GM12878 (cell line): ENCODE measurements at regions of chr17 and their contacts with region 1.

Region 1: DNA sequence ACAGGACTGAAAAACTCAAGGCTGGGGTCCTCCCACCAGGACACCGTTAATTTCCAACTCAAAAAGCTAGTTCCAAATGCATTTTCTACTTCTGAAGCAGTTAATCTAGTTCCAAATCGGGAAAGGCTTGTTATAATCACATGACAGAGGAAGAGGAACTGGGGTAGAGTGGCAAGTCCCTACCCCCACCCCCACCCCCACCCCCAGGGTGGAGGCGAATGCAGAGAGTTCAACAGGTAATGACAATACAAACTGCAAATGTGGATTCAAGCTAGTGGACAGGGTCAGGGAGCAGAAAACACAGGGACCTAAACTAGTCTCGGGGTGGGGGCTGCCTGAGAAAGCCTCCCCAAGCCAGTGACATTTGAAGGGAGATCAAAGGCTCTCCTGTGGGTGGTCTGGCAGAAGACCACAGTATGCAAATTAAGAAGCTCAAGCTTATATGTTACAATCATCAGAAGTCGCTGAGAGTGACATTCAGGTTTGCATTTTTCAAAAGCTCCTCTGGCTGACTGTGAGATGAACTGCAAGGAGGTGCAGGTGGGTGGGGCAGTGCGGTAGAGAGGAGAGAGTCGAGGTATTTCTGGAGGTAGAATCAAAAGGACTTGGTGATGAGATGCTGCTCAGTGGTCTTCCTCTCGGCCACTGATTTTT is 56.4 kb upstream of the SLC25A19 start:
- DNase-seq: peak; percentile 91
- ATAC-seq: peak; percentile 79
- H3K4me3 ChIP-seq: peak overlapping the region; percentile 62
- H3K27ac ChIP-seq: peak overlapping the region; percentile 85
- H3K4me1 ChIP-seq: peaks cover 68% of the 10 kb centered on the region
- H3K27me3 ChIP-seq: no peaks in the 10 kb centered on the region
- CTCF ChIP-seq: no peak
- EP300 ChIP-seq: peak; percentile 34 to 65; a peak in 1 of 4 replicates
- POLR2A ChIP-seq: no peak
- RAD21 ChIP-seq: 0 out of 2 replicates have a peak, but pooled peaks have one; percentile 25

Region 2: DNA sequence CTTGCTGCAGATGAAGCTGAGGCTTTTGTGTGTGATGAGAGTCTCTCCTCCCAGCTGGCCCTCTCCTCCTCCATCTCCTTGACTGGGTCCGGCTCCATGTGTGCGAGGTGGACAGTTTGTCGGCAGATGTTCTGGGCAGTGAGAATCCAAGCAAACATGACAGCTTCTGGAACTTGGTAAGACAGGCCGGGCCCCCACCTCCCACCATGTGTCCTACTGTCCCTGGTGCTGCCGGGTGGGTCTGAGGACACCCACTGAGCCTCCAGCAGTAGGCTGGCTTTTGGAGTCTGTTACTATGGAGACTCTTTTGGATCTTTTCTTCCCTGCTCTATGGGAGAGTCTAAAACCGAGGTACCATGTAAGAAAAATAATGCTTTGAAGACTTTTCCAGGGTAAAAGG is 127.5 kb before region 1 on chr17:
- CTCF ChIA-PET with region 1: no interaction called
- POLR2A ChIA-PET with region 1: no interaction called
- RAD21 ChIA-PET with region 1: no interaction called
- SMC1A ChIA-PET with region 1: no interaction called
- in situ Hi-C with region 1: no loop called
- intact Hi-C with region 1: no loop called
- DNase-seq: no peak
- ATAC-seq: no peak
- H3K4me3 ChIP-seq: no peak overlapping the region
- H3K27ac ChIP-seq: no peak overlapping the region
- H3K4me1 ChIP-seq: no peaks in the 10 kb centered on the region
- H3K27me3 ChIP-seq: no peaks in the 10 kb centered on the region
- CTCF ChIP-seq: no peak
- EP300 ChIP-seq: no peak
- POLR2A ChIP-seq: no peak
- RAD21 ChIP-seq: no peak

Region 3: GRCh38 chr17:75313941-75314551 is 31.6 kb before region 1 on chr17:
- CTCF ChIA-PET with region 1: interaction called, 182 read pairs
- POLR2A ChIA-PET with region 1: interaction called, 21 read pairs
- RAD21 ChIA-PET with region 1: interaction called, 17 read pairs
- SMC1A ChIA-PET with region 1: interaction called, 83 read pairs
- in situ Hi-C with region 1: no loop called
- intact Hi-C with region 1: no loop called
- DNase-seq: no peak
- ATAC-seq: peak; percentile 79
- H3K4me3 ChIP-seq: no peak overlapping the region
- H3K27ac ChIP-seq: peak overlapping the region; percentile 87
- H3K4me1 ChIP-seq: peaks cover 67% of the 10 kb centered on the region
- H3K27me3 ChIP-seq: no peaks in the 10 kb centered on the region
- CTCF ChIP-seq: no peak
- EP300 ChIP-seq: 0 out of 4 replicates have a peak, but pooled peaks of 1 of the 2 experiments have one; percentile 36
- POLR2A ChIP-seq: no peak
- RAD21 ChIP-seq: no peak

Region 4: DNA sequence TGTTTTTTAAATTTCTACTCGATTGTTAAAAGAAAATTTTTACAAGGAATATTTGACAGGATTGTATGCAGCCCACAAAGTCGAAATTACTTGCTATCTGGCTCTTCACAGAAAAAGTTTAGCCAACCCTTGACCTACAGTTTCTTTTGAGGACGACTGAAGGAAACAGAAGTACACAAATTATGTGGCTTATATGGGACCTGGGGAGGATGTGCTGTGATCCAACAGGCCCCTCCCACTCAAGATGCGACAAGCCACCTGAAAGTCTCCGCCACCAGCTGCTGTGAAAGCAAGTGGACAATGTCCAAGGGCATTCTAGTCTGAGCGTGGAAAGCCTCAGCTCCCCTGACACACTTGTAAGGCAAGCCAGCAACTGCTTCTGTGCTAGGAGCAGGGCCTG is 14.0 kb before region 1 on chr17:
- CTCF ChIA-PET with region 1: interaction called, 182 read pairs
- POLR2A ChIA-PET with region 1: interaction called, 39 read pairs
- RAD21 ChIA-PET with region 1: interaction called, 18 read pairs
- SMC1A ChIA-PET with region 1: interaction called, 54 read pairs
- in situ Hi-C with region 1: no loop called
- intact Hi-C with region 1: no loop called
- DNase-seq: no peak
- ATAC-seq: no peak
- H3K4me3 ChIP-seq: no peak overlapping the region
- H3K27ac ChIP-seq: no peak overlapping the region
- H3K4me1 ChIP-seq: peaks cover 7% of the 10 kb centered on the region
- H3K27me3 ChIP-seq: no peaks in the 10 kb centered on the region
- CTCF ChIP-seq: no peak
- EP300 ChIP-seq: no peak
- POLR2A ChIP-seq: no peak
- RAD21 ChIP-seq: no peak

Region 5: GRCh38 chr17:75364078-75364477 is 18.4 kb after region 1 on chr17:
- CTCF ChIA-PET with region 1: interaction called, 14 read pairs
- POLR2A ChIA-PET with region 1: interaction called, 64 read pairs
- RAD21 ChIA-PET with region 1: interaction called, 14 read pairs
- SMC1A ChIA-PET with region 1: interaction called, 125 read pairs
- in situ Hi-C with region 1: no loop called
- intact Hi-C with region 1: loop called (anchors 2 kb)
- DNase-seq: no peak
- ATAC-seq: no peak
- H3K4me3 ChIP-seq: no peak overlapping the region
- H3K27ac ChIP-seq: peak overlapping the region; percentile 54; the same call in 1 of the 2 replicates
- H3K4me1 ChIP-seq: peaks cover 64% of the 10 kb centered on the region
- H3K27me3 ChIP-seq: no peaks in the 10 kb centered on the region
- CTCF ChIP-seq: no peak
- EP300 ChIP-seq: no peak
- POLR2A ChIP-seq: no peak
- RAD21 ChIP-seq: no peak

Region 6: GRCh38 chr17:75393523-75394331 is 48.1 kb after region 1 on chr17:
- CTCF ChIA-PET with region 1: interaction called, 10 read pairs
- POLR2A ChIA-PET with region 1: interaction called, 44 read pairs
- RAD21 ChIA-PET with region 1: interaction called, 22 read pairs
- SMC1A ChIA-PET with region 1: interaction called, 93 read pairs
- in situ Hi-C with region 1: no loop called
- intact Hi-C with region 1: no loop called
- DNase-seq: peak; percentile 79
- ATAC-seq: peak; percentile 95
- H3K4me3 ChIP-seq: peak overlapping the region; percentile 77
- H3K27ac ChIP-seq: peak overlapping the region; percentile 57
- H3K4me1 ChIP-seq: peaks cover 21% of the 10 kb centered on the region
- H3K27me3 ChIP-seq: no peaks in the 10 kb centered on the region
- CTCF ChIP-seq: 0 out of 6 replicates have a peak, but pooled peaks of 1 of the 3 experiments have one; percentile 3
- EP300 ChIP-seq: no peak
- POLR2A ChIP-seq: peak; percentile 51; the same call in 1 of the 2 replicates
- RAD21 ChIP-seq: no peak

Region 7: DNA sequence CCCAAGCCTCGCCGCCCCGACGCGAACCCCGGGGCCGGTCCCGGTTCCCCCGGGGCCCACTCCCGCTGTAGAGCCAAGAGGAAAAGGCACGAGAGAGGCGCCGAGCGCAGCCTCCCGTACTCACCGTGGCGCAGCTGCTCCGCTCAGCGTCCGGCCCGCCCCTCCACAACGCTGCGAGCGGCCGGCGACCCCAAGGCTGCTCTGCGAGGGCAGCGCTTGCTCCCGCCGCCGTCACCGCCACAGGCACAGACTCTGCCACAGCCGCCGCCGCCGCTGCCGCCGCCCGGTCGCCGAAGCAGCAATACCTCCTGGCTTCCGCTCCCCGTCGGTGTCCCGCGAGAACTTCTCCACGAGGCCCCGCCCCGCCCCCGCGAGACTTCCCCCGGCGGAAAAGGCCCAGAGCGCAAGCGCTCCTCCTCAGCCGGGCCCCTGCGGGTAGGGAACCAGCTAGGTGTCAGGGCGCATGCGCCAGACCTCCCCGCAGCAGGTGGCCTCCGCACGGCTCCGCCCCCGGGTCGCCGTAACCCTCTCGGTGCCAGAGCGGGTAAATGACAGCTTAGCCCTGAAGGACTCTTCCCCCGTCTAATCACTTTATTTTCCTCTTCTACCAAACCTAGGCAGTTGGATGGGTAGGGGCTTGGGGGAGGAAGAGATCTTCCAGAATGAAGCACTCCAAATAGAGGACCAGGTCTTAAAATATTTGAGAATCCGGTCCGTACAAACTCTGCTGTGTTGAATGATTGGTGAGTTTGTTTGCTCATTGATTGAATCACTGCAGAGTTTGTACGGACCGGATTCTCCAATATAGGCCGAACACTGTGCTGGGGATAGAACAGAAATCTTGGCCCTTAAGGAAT is 60.0 kb after region 1 on chr17 and contains the start of gene GRB2:
- CTCF ChIA-PET with region 1: interaction called, 7 read pairs
- POLR2A ChIA-PET with region 1: interaction called, 18 read pairs
- RAD21 ChIA-PET with region 1: interaction called, 23 read pairs
- SMC1A ChIA-PET with region 1: interaction called, 21 read pairs
- in situ Hi-C with region 1: no loop called
- intact Hi-C with region 1: no loop called
- DNase-seq: peak; percentile 83
- ATAC-seq: peak; percentile 82
- H3K4me3 ChIP-seq: peak within 1 kb of the TSS; percentile 87
- H3K27ac ChIP-seq: peak within 1 kb of the TSS; percentile 91
- H3K4me1 ChIP-seq: peaks cover 16% of the 10 kb centered on the region
- H3K27me3 ChIP-seq: no peaks in the 10 kb centered on the region
- CTCF ChIP-seq: no peak
- EP300 ChIP-seq: peak in 1 of 2 experiments; percentile 30; a peak in 1 of 4 replicates
- POLR2A ChIP-seq: peak; percentile 98
- RAD21 ChIP-seq: no peak
- polyA plus RNA-seq, gene GRB2: 113 to 152 TPM